ENCODE measurements at regions of chr7 and their contacts with region 1.

Region 1: DNA sequence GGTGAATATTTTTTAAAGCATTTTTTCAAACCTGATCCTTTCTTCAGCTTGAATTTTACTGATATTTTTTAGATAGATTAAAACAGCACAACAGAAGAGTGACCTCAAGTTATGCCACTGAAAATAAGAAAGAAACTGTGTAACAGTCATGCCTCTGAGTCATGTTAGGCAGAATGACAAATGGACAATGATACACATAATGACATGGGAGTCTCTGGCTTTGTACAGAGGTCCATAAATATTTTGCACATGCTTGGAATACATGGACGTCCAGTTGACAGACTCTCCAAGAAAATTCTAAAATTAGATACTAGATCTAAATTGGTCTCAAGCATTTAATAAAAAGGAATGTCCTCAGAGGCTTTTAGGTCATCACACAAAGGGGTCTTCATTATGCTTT is 21.9 kb upstream of the SEMA3A start:
- DNase-seq: no peak

Region 2: DNA sequence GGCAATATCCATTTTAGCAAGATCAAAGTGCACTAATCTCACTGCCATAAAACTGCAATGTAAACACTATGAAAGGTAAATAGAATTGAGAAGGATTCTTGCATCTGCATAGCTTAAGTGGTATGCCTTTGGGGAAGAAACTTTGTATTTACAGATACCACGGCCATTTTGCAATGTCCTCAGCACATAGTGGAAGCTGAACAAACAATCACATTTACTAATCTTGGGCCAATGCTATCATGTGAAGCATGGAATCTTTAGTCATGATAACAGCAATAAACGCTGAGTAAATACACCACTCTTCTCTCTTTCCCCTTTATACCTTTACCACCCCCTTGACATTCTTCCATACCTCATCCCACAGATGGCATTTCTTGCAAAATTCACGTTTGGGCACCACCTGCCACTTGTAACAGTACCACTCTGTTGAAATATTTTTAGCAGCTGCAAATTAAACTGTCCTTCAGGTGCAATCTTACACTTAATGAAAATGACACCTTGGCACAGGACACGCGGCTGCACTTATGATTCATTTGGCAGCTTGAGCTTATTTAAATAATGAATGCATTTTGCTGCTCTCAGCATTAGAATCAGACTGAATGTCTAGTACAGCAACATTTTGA is 193.7 kb before region 1 on chr7:
- CTCF ChIA-PET with region 1: interaction called, 11 read pairs
- POLR2A ChIA-PET with region 1: no interaction called
- DNase-seq: no peak

Region 3: GRCh38 chr7:84152995-84153394 is 63.5 kb before region 1 on chr7:
- CTCF ChIA-PET with region 1: interaction called, 10 read pairs
- POLR2A ChIA-PET with region 1: no interaction called
- DNase-seq: no peak

Measured in HEK293T (cell line).